Posterior vena cava (tissue), 2 donors: ENCODE measurements at regions of chr5 and their contacts with region 1.

Region 1: GRCh38 chr5:56900858-56901578 is 8.4 kb upstream of the SETD9 start:
- DNase-seq: no peak

Region 2: DNA sequence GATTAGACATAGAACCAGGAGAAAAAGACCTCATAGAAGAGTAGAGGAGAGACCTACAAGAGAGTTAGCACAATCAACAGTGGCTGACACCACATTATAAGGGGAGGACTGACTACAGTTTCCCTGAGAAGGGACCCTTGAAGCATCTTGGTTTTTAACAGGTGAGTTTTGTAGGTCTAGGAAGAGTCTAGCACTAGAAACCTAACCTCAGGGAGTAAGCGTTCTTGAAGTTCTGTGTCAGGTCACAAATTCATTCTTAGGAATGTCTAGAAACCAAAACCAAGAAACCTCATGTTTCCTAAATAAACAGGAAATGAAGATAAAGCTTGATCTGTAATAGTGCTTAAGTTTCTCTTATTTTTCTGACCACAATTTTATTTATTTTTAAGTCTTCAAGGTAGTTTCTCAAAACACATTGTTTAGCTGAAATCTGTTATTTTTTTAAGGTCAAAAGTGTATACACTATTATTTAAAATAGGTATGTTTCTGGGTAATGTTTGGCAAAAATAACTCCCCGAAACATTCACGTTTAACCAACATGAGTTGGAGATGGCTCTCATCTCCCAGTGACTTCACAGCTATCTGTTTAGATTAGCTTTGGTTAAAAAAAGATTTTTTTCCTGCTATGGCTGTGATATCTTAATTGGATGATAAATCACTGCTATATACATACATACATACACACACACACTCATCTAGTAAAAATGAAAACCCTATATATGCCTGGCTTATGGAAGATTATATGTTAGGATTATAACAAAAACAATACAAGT is 48.6 kb before region 1 on chr5:
- intact Hi-C with region 1: no loop called
- DNase-seq: no peak

Region 3: GRCh38 chr5:57133574-57133973 is 232.6 kb after region 1 on chr5:
- intact Hi-C with region 1: loop called in 1 of 2 experiments (anchors 5 kb)
- DNase-seq: no peak

Region 4: DNA sequence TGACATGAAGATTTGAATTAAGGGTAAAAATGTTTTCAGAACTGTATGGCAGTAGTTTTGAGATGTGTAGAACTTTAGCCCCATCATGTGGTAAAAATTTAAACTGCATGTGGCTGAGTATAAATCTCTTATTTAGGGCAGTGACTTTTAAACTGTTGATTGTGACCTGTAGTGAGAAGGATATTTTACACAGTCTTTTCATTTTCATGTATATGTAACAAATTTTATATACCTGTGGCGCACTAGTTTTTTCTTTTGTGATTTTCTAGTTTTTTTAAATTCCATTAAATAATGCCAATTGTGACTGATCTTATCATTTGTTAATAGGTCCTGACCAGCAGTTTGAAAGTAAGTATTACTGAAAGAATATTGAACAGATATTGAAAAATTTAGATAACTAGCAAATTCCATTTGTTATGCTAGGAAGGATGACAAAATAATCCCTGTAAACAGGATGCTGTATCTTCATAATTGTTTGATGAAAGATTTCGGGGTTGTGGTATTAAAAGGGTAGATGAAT is 320.1 kb after region 1 on chr5:
- intact Hi-C with region 1: loop called in 1 of 2 experiments (anchors 5 kb)
- DNase-seq: no peak